A549 (cell line): ENCODE measurements at regions of chr2 and their contacts with region 1.

Region 1: GRCh38 chr2:97806738-97807618 is 93.6 kb downstream of the ZAP70 start:
- DNase-seq: peak; percentile 34 to 72
- ATAC-seq: peak; percentile 98 to 100
- H3K4me3 ChIP-seq: no peak overlapping the region
- H3K27ac ChIP-seq: no peak overlapping the region
- H3K4me1 ChIP-seq: no peaks in the 10 kb centered on the region
- CTCF ChIP-seq: peak; percentile 87
- EP300 ChIP-seq: no peak
- POLR2A ChIP-seq: no peak
- RAD21 ChIP-seq: peak; percentile 94

Region 2: DNA sequence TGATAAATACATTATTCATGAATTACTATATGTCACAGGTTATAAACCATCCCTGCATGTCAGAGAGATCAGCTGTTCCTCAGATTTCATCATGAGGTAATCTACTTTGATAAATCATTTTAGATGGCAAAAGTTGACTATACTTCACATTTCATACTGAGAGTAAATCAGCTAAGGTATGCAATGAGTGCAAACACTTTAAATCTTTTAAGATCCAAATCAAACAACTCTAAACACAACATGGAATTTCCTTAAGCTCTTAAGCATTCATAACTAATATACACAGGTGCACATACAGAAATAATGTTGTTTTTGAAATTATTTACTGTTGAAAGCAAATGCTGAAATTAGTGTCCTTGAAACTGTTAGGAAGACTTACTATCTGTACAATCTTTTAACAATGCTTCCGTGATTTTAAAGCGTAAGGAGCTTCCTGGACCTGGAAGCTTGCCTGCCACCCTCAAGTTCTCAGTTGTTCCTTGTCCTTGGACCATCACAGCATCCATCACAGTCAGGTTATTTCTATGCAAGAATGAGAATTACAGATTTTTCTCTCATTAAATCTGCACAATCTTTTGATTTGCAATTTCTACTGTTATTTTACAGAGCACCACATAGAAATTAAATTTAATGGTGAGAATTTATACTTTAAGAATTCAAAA is 10.4 kb before region 1 on chr2:
- CTCF ChIA-PET with region 1: interaction called, 10 read pairs
- POLR2A ChIA-PET with region 1: no interaction called
- DNase-seq: no peak
- ATAC-seq: no peak
- H3K4me3 ChIP-seq: no peak overlapping the region
- H3K27ac ChIP-seq: no peak overlapping the region
- H3K4me1 ChIP-seq: no peaks in the 10 kb centered on the region
- CTCF ChIP-seq: no peak
- EP300 ChIP-seq: no peak
- POLR2A ChIP-seq: no peak
- RAD21 ChIP-seq: no peak

Region 3: GRCh38 chr2:98063291-98063854 is 256.4 kb after region 1 on chr2:
- CTCF ChIA-PET with region 1: no interaction called
- POLR2A ChIA-PET with region 1: no interaction called
- DNase-seq: no peak
- ATAC-seq: no peak
- H3K4me3 ChIP-seq: no peak overlapping the region
- H3K27ac ChIP-seq: no peak overlapping the region
- H3K4me1 ChIP-seq: no peaks in the 10 kb centered on the region
- CTCF ChIP-seq: no peak
- EP300 ChIP-seq: no peak
- POLR2A ChIP-seq: no peak
- RAD21 ChIP-seq: no peak

Region 4: DNA sequence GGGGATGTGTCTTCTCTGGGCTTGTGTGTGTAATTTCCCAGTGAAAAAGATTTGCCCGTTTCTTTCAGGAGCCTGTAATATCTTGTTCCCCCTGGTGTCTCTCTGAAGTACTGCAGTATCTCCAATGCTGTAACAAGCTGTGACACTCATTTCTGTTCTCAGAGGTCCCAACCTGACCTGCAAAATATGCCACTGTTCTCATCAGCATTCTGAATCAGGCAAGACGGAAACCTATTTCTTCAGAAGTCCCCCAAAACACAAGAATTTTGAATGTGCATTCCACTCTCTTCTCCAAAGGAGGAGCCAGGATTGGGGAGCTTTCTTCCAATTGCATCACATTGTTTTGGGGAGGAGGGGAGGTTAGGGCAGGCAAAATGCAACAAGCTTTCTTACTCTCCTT is 462.3 kb after region 1 on chr2:
- CTCF ChIA-PET with region 1: interaction called, 21 read pairs
- POLR2A ChIA-PET with region 1: no interaction called
- DNase-seq: peak; percentile 44 to 51
- ATAC-seq: peak; percentile 74 to 80; a peak in 5 of 6 replicates
- H3K4me3 ChIP-seq: no peak overlapping the region
- H3K27ac ChIP-seq: no peak overlapping the region; a peak in 1 of 6 replicates
- H3K4me1 ChIP-seq: no peaks in the 10 kb centered on the region
- CTCF ChIP-seq: peak; percentile 53
- EP300 ChIP-seq: no peak
- POLR2A ChIP-seq: no peak
- RAD21 ChIP-seq: peak; percentile 55 to 69; a peak in 4 of 5 replicates

Region 5: DNA sequence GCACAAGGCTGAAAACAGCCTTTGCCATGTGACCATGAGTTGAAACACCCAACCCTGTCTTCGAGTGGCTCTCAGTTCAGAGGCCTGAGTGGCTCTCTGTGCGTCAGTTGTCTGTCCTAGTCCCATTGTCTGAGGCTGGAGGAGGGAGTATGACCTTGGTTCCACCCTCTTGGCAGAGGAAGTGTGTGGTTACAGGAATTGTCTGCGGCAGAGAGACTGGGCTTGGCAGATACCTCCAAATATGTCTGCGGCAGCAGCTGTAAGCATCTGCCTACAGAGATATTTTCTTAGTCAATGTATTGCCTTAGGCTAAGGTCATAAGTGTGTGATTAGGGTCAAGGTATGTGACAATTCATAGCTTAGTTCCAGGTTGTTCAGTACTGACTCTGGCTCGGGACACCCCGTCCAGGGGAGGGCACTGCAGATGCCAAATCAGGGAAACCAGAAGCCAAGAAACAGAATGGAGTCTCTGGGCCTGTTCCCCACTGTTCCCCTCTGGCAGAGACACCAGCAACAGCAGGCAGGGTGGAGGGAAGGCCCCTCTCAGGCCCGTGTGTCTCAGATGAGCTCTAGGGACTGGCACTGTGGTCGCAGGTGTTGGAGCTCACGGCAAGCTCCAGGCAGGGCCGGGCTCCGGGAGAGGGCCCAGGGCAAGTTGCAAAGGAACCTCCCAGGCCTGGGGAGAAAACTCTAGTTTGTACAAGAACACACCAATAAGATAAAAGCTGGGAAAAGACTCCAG is 572.1 kb after region 1 on chr2:
- CTCF ChIA-PET with region 1: interaction called, 38 read pairs
- POLR2A ChIA-PET with region 1: no interaction called
- DNase-seq: no peak
- ATAC-seq: no peak
- H3K4me3 ChIP-seq: no peak overlapping the region
- H3K27ac ChIP-seq: no peak overlapping the region
- H3K4me1 ChIP-seq: no peaks in the 10 kb centered on the region
- CTCF ChIP-seq: no peak
- EP300 ChIP-seq: no peak
- POLR2A ChIP-seq: no peak
- RAD21 ChIP-seq: no peak

Region 6: DNA sequence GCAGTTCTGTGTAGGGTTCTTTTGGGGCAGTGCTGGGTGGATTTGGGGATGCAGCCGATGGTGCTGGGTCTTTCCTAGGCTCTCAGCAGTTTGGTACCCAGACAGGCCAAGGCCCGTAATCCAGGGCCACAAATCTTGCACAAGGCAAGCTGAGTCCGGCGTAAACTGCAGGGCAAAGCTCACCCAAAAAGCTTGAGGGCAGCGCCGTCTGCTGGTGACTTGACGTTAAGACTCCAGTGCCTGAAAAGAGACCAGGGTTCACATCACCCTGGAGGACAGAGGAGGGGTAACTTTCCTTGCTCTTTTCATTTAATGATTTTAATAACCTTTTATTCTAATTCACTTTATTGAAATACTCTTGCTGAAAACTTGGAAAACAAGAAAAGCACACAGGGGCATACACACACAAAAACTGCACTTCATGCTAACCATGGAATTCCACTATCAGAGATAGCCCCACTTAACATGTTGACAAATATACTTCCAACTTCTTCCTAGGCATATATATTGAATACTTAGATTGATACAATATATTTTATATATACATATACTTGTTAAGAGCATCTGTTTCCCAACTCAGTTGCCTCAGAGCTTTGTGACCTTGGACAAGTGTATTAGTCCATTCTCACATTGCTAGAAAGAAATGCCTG is 578.2 kb after region 1 on chr2:
- CTCF ChIA-PET with region 1: interaction called, 38 read pairs
- POLR2A ChIA-PET with region 1: no interaction called
- DNase-seq: peak; percentile 76 to 78
- ATAC-seq: peak; percentile 87 to 98
- H3K4me3 ChIP-seq: no peak overlapping the region
- H3K27ac ChIP-seq: no peak overlapping the region
- H3K4me1 ChIP-seq: no peaks in the 10 kb centered on the region
- CTCF ChIP-seq: peak; percentile 95
- EP300 ChIP-seq: no peak
- POLR2A ChIP-seq: no peak
- RAD21 ChIP-seq: peak; percentile 97 to 99